Activated CD4-positive, alpha-beta T cell treated with anti-CD3 and anti-CD28 coated beads, Interleukin-2, amount 10 ng/mL, durations not matched to agents 24 days and 14 days (primary cell): ENCODE measurements at regions of chr21 and their contacts with region 1.

Region 1: DNA sequence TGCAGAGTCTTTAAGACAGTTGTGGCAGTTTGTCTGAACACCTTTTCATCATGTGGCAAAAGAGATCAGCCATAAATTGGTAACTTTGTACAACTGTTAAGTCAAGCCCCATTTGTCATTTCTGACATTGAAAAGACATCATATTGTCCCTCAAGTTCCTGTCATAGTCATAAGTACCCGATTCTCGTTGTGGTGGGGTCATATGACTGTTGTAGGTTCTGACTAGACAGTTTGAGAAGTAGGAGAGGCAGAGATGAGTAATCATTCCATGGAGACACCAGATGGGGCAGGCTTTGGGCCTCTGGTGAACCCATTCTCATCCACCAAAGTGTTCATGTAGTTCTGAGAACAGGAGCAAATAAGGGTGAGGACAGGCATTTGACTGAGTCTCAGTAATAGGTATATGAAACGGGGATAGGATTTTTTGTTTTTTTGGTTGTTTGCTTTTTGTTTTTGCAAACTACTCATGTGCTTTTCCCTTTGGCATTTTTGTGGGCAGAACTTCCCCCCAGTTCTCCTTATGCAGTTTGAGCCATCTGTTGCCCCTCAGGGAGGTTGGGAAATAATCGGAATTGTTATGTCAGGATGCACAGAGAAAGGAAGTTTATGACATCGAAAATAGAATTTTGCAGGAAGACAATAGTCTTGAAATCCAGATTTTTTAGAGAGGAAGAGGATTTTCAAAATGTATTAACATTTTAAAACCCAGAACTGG is 86.9 kb upstream of the KCNE2 start:
- DNase-seq: peak; percentile 66
- H3K4me3 Mint-ChIP-seq: no peak overlapping the region
- H3K27ac Mint-ChIP-seq: peak overlapping the region; percentile 54
- H3K4me1 Mint-ChIP-seq: peaks cover 7% of the 10 kb centered on the region
- H3K27me3 Mint-ChIP-seq: peaks cover 8% of the 10 kb centered on the region

Region 2: DNA sequence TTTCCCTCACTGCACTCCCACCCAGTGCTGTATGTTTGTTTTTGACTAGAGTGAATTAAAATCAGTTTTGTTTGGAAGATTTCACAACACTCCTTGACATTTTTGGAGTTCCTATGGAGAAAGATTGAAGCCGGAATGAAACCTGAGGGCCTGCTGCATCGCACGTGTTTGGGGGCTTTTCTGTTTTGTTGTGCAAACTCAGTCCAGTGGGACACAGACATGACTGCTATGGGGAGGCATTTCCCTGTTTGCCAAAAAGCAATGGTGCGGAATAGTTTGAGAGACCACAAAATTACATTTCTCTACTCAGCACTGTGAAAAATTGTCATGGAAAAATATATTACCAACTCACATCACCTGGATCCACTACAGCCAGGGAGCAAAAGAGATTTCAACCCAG is 43.1 kb after region 1 on chr21:
- intact Hi-C with region 1: loop called (anchors 10 kb)
- DNase-seq: no peak
- H3K4me3 Mint-ChIP-seq: no peak overlapping the region
- H3K27ac Mint-ChIP-seq: no peak overlapping the region
- H3K4me1 Mint-ChIP-seq: no peaks in the 10 kb centered on the region
- H3K27me3 Mint-ChIP-seq: peaks cover 25% of the 10 kb centered on the region